Naive thymus-derived CD4-positive, alpha-beta T cell (primary cell): ENCODE measurements at regions of chr20 and their contacts with region 1.

Region 1: GRCh38 chr20:35954200-35954906 is at the start of gene SCAND1:
- DNase-seq: peak; percentile 94 to 98 (median 97)
- ATAC-seq: peak; percentile 92
- H3K4me3 ChIP-seq: peak within 1 kb of the TSS; percentile 84
- H3K4me3 Mint-ChIP-seq: peak within 1 kb of the TSS; percentile 86 to 99 (median 99)
- H3K27ac ChIP-seq: peak within 1 kb of the TSS; percentile 98
- H3K27ac Mint-ChIP-seq: peak within 1 kb of the TSS; percentile 96 to 100 (median 99)
- H3K4me1 ChIP-seq: peaks cover 17 to 23% of the 10 kb centered on the region in 2 donors
- H3K4me1 Mint-ChIP-seq: peaks cover 13 to 36% (median 22%) of the 10 kb centered on the region in 7 donors
- H3K27me3 ChIP-seq: no peaks in the 10 kb centered on the region
- H3K27me3 Mint-ChIP-seq: peaks cover 0 to 2% (median 0%) of the 10 kb centered on the region in 5 donors
- total RNA-seq, gene SCAND1: 41.8 to 56.2 (median 51.7) TPM

Region 2: DNA sequence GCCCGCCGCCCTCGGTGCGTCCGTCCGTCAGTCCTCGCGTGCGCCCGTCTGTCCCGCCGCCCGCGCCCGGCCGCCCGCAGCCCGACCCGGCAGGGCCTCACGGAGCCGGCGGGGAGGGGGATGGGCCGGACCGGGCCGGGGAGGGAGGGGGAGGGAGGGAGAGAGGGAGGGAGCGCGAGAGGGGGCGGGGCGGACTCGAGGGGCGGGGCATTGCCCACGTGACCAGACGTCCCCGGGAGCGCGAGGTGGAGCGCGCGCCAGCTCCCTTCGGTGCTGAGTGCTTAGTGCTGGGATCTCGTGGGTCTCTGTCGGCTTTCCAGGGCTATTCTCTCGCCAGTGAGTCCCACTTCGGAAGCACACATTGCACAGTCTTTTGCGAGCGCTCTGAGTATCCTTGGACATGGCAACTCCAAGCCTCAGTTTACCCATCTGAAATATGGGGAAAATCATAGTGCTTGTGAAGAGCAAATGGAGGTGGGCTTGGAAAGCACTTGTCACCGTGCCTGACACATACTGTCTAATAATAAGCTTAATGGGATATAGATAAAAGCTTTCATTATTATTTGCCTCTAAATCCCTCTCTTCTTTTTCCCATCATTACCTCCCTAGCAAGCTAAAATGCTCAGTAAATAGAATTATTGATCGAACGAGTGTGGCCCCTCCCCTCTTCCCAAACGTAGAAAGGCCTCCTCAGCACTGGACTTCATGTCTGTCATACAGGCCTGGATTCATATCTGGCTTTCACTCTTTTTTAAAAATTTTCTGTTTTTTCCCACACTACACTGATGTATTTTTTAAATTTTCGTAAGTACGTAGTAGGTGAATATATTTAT is 1128.6 kb before region 1 on chr20 and contains the start of gene NCOA6:
- CTCF ChIA-PET with region 1: no interaction called
- POLR2A ChIA-PET with region 1: no interaction called
- intact Hi-C with region 1: loop called in 1 of 2 experiments (anchors 10 kb)
- DNase-seq: peak; percentile 56 to 86 (median 74)
- ATAC-seq: peak; percentile 90
- H3K4me3 ChIP-seq: peak within 1 kb of the TSS; percentile 78
- H3K4me3 Mint-ChIP-seq: peak within 1 kb of the TSS; percentile 83 to 100 (median 98)
- H3K27ac ChIP-seq: peak within 1 kb of the TSS; percentile 76
- H3K27ac Mint-ChIP-seq: peak within 1 kb of the TSS; percentile 85 to 95 (median 91)
- H3K4me1 ChIP-seq: peaks cover 16 to 17% of the 10 kb centered on the region in 2 donors
- H3K4me1 Mint-ChIP-seq: peaks cover 30 to 50% (median 43%) of the 10 kb centered on the region in 7 donors
- H3K27me3 ChIP-seq: no peaks in the 10 kb centered on the region
- H3K27me3 Mint-ChIP-seq: peaks cover 0 to 17% (median 0%) of the 10 kb centered on the region in 5 donors
- total RNA-seq, gene NCOA6: 23.6 to 31.9 (median 29.3) TPM

Region 3: GRCh38 chr20:35454881-35455609 is 499.3 kb before region 1 on chr20 and contains the start of gene CEP250:
- CTCF ChIA-PET with region 1: no interaction called
- POLR2A ChIA-PET with region 1: interaction called, 15 read pairs
- intact Hi-C with region 1: loop called (anchors 1 to 2 kb)
- DNase-seq: peak; percentile 89 to 97 (median 96)
- ATAC-seq: peak; percentile 99
- H3K4me3 ChIP-seq: peak within 1 kb of the TSS; percentile 94
- H3K4me3 Mint-ChIP-seq: peak within 1 kb of the TSS; percentile 82 to 98 (median 93)
- H3K27ac ChIP-seq: peak within 1 kb of the TSS; percentile 94
- H3K27ac Mint-ChIP-seq: peak within 1 kb of the TSS; percentile 86 to 99 (median 98)
- H3K4me1 ChIP-seq: no peaks in the 10 kb centered on the region
- H3K4me1 Mint-ChIP-seq: peaks cover 0 to 38% (median 23%) of the 10 kb centered on the region in 7 donors
- H3K27me3 ChIP-seq: no peaks in the 10 kb centered on the region
- H3K27me3 Mint-ChIP-seq: no peaks in the 10 kb centered on the region
- total RNA-seq, gene CEP250: 34.5 to 75.0 (median 70.7) TPM

Region 4: DNA sequence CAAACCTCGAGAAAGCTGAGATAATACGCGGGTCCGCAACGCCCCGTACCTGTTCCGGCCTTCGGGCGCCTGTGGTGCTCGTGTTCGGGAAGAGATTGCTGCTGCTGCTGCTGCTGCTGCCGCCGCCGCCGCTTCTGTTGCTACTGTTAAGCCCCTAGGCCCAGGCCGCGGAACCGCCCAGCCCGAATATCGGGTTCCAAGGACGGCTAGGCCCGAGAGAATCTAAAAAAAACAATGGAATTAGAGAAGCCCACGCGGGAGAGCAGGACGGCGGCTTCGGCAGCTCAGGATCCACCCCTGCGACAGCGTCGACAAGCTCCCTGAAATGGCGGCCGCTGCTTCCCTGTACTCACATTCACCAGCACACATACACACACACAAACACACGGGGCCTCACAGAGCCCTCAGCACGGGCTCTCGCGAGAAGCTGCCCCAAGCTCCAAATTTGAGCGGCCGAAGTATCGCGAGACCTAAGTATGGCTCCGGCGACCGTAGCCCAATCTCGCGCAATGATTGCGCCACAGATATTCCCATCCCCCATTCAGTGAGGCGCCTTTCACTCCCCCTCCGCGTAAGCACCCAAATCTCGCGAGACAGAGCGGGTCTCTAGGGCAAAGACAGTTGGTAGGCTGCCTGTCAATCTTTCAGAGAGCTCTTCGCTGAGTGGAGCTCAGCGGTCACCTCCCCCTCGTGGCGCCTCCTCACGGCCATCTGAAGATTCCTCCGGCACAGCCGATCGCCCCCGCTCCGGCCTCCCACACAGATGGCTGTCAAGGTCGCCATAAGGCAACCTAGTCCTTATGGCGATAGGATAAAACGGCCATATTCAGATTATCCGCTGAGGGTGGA is 212.2 kb before region 1 on chr20 and contains the start of gene RBM39:
- CTCF ChIA-PET with region 1: interaction called, 6 read pairs
- POLR2A ChIA-PET with region 1: interaction called, 44 read pairs
- intact Hi-C with region 1: loop called (anchors 1 kb)
- DNase-seq: peak; percentile 92 to 100 (median 99)
- ATAC-seq: peak; percentile 92
- H3K4me3 ChIP-seq: peak within 1 kb of the TSS; percentile 98
- H3K4me3 Mint-ChIP-seq: peak within 1 kb of the TSS; percentile 86 to 100 (median 98)
- H3K27ac ChIP-seq: peak within 1 kb of the TSS; percentile 98
- H3K27ac Mint-ChIP-seq: peak within 1 kb of the TSS; percentile 96 to 100 (median 100)
- H3K4me1 ChIP-seq: peaks cover 34 to 49% of the 10 kb centered on the region in 2 donors
- H3K4me1 Mint-ChIP-seq: peaks cover 22 to 53% (median 45%) of the 10 kb centered on the region in 7 donors
- H3K27me3 ChIP-seq: no peaks in the 10 kb centered on the region
- H3K27me3 Mint-ChIP-seq: no peaks in the 10 kb centered on the region
- total RNA-seq, gene RBM39: 372 to 1,041 (median 699) TPM

Region 5: GRCh38 chr20:36064658-36065426 is 110.5 kb after region 1 on chr20:
- CTCF ChIA-PET with region 1: interaction called, 3 read pairs
- POLR2A ChIA-PET with region 1: interaction called, 7 read pairs
- intact Hi-C with region 1: loop called in 1 of 2 experiments (anchors 1 kb)
- DNase-seq: peak; percentile 83 to 97 (median 90)
- ATAC-seq: peak; percentile 99
- H3K4me3 ChIP-seq: peak overlapping the region; percentile 70
- H3K4me3 Mint-ChIP-seq: peak overlapping the region; percentile 81 to 92 (median 90)
- H3K27ac ChIP-seq: peak overlapping the region; percentile 63
- H3K27ac Mint-ChIP-seq: peak overlapping the region in 8 of 9 donors; percentile 41 to 90 (median 68)
- H3K4me1 ChIP-seq: peaks cover 0 to 3% of the 10 kb centered on the region in 2 donors
- H3K4me1 Mint-ChIP-seq: peaks cover 0 to 10% (median 1%) of the 10 kb centered on the region in 7 donors
- H3K27me3 ChIP-seq: no peaks in the 10 kb centered on the region
- H3K27me3 Mint-ChIP-seq: peaks cover 0 to 57% (median 0%) of the 10 kb centered on the region in 5 donors

Region 6: GRCh38 chr20:37527638-37528441 is 1573.5 kb after region 1 on chr20 and contains the start of gene BLCAP:
- CTCF ChIA-PET with region 1: no interaction called
- POLR2A ChIA-PET with region 1: interaction called, 3 read pairs
- intact Hi-C with region 1: loop called in 1 of 2 experiments (anchors 2 kb)
- DNase-seq: peak; percentile 89 to 98 (median 96)
- ATAC-seq: peak; percentile 96
- H3K4me3 ChIP-seq: peak within 1 kb of the TSS; percentile 86
- H3K4me3 Mint-ChIP-seq: peak within 1 kb of the TSS; percentile 81 to 95 (median 90)
- H3K27ac ChIP-seq: peak within 1 kb of the TSS; percentile 99
- H3K27ac Mint-ChIP-seq: peak within 1 kb of the TSS; percentile 98 to 100 (median 99)
- H3K4me1 ChIP-seq: peaks cover 30 to 35% of the 10 kb centered on the region in 2 donors
- H3K4me1 Mint-ChIP-seq: peaks cover 41 to 52% (median 46%) of the 10 kb centered on the region in 7 donors
- H3K27me3 ChIP-seq: no peaks in the 10 kb centered on the region
- H3K27me3 Mint-ChIP-seq: peaks cover 0 to 2% (median 0%) of the 10 kb centered on the region in 5 donors
- total RNA-seq, gene BLCAP: 42.1 to 94.7 (median 73.4) TPM